ENCODE measurements at regions of chr5 and their contacts with region 1.

Region 1: DNA sequence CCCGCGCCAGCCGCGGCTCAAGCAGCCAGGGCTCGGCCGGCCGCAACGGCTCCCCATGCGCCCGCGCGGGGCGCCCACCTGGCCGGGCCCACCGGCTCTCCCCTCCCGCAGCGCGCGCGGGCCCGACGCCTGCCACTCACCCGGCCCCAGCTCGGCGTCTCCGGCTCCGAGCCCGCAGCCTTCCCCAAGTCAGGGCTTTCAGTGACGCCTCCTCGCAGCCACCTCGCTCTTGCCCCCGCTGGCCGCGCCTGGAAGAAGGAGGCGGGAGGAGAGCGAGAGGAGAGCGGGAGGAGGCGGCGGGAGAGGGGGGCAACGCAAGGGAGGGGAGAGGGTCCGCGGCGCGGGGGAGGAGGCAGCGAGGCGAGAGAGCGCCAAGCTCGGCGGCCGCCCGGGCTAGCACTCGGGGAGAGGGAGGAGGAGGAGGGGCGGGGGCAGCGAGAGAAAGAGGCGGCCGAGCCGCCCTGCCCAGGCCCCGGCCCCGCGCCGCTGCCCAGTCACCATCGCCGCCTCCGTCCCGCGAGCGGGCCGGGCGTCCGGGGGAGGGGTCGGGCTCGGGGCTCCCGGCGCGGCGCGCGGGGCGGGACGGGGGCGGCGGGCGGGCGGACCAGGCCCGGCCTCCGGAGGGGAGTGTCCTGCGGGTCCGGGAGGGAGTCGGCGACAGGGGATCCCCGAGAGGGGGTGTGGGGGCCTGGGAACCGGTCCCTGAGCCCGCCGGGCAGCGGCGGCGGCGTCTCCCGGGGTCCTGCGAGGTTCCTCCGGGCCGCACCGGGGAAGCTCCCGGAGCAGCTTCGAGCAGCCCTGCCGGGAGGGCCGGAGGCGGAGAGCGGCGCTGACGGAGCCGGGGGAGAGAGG is at the start of gene LHFPL2:
- DNase-seq: peak; percentile 78 to 88 (median 83)
- ATAC-seq: peak; percentile 44 to 91 (median 84)
- H3K4me3 ChIP-seq: peak within 1 kb of the TSS; percentile 50 to 97 (median 78)
- H3K27ac ChIP-seq: peak within 1 kb of the TSS; percentile 87 to 94 (median 91)
- H3K4me1 ChIP-seq: peaks cover 0 to 30% (median 14%) of the 10 kb centered on the region in 12 donors
- H3K27me3 ChIP-seq: peaks cover 0 to 4% (median 0%) of the 10 kb centered on the region in 9 donors
- CTCF ChIP-seq: no peak
- POLR2A ChIP-seq: peak in 1 of 2 donors; percentile 15
- total RNA-seq, gene LHFPL2: 5.6 to 35.6 (median 10.1) TPM

Region 2: GRCh38 chr5:78300464-78301045 is 348.0 kb before region 1 on chr5:
- intact Hi-C with region 1: loop called in 2 of 10 experiments (anchors 10 kb)
- DNase-seq: no peak
- ATAC-seq: no peak
- H3K4me3 ChIP-seq: no peak overlapping the region
- H3K27ac ChIP-seq: no peak overlapping the region
- H3K4me1 ChIP-seq: peaks cover 0 to 5% (median 3%) of the 10 kb centered on the region in 12 donors
- H3K27me3 ChIP-seq: no peaks in the 10 kb centered on the region
- CTCF ChIP-seq: peak in 9 of 12 donors; percentile 17 to 52 (median 36)
- POLR2A ChIP-seq: no peak

Region 3: GRCh38 chr5:78547731-78548615 is 100.6 kb before region 1 on chr5:
- intact Hi-C with region 1: loop called in 5 of 10 experiments (anchors 5 to 10 kb)
- DNase-seq: peak; percentile 89 to 94 (median 94)
- ATAC-seq: peak; percentile 88 to 93 (median 91)
- H3K4me3 ChIP-seq: peak overlapping the region in 1 of 12 donors; percentile 29
- H3K27ac ChIP-seq: peak overlapping the region; percentile 68 to 91 (median 84)
- H3K4me1 ChIP-seq: peaks cover 15 to 74% (median 47%) of the 10 kb centered on the region in 12 donors
- H3K27me3 ChIP-seq: no peaks in the 10 kb centered on the region
- CTCF ChIP-seq: no peak
- POLR2A ChIP-seq: peak in 1 of 2 donors; percentile 10

Region 4: GRCh38 chr5:78803353-78803752 is 154.8 kb after region 1 on chr5:
- intact Hi-C with region 1: loop called in 1 of 10 experiments (anchors 10 kb)
- DNase-seq: peak; percentile 37 to 89 (median 80)
- ATAC-seq: peak; percentile 72 to 92 (median 82)
- H3K4me3 ChIP-seq: no peak overlapping the region
- H3K27ac ChIP-seq: peak overlapping the region in 5 of 12 donors; percentile 12 to 64 (median 37)
- H3K4me1 ChIP-seq: peaks cover 0 to 15% (median 2%) of the 10 kb centered on the region in 12 donors
- H3K27me3 ChIP-seq: no peaks in the 10 kb centered on the region
- CTCF ChIP-seq: no peak
- POLR2A ChIP-seq: no peak